Psoas muscle (tissue), 8 donors: ENCODE measurements at regions of chr5 and their contacts with region 1.

Region 1: GRCh38 chr5:81556809-81557208 is 162.9 kb upstream of the ACOT12 start:
- DNase-seq: no peak
- ATAC-seq: no peak
- H3K4me3 ChIP-seq: no peak overlapping the region
- H3K27ac ChIP-seq: no peak overlapping the region
- H3K4me1 ChIP-seq: peaks cover 22% of the 10 kb centered on the region
- H3K27me3 ChIP-seq: no peaks in the 10 kb centered on the region
- CTCF ChIP-seq: no peak

Region 2: GRCh38 chr5:81633891-81634290 is 77.1 kb after region 1 on chr5:
- intact Hi-C with region 1: loop called in 1 of 2 experiments (anchors 2 kb)
- DNase-seq: no peak
- ATAC-seq: no peak
- H3K4me3 ChIP-seq: no peak overlapping the region
- H3K27ac ChIP-seq: no peak overlapping the region
- H3K4me1 ChIP-seq: no peaks in the 10 kb centered on the region
- H3K27me3 ChIP-seq: no peaks in the 10 kb centered on the region
- CTCF ChIP-seq: no peak